ENCODE measurements at regions of chr16 and their contacts with region 1.

Region 1: GRCh38 chr16:53129281-53130158 is 74.7 kb downstream of the CHD9 start:
- DNase-seq: peak; percentile 55
- H3K4me3 ChIP-seq: peak overlapping the region; percentile 74
- H3K27ac ChIP-seq: peak overlapping the region; percentile 91
- H3K4me1 ChIP-seq: peaks cover 17% of the 10 kb centered on the region
- H3K27me3 ChIP-seq: no peaks in the 10 kb centered on the region

Region 2: GRCh38 chr16:53061701-53062159 is 67.8 kb before region 1 on chr16:
- in situ Hi-C with region 1: loop called (anchors 10 kb)
- DNase-seq: no peak
- H3K4me3 ChIP-seq: no peak overlapping the region
- H3K27ac ChIP-seq: no peak overlapping the region
- H3K4me1 ChIP-seq: peaks cover 7% of the 10 kb centered on the region; the same call in 1 of the 2 replicates
- H3K27me3 ChIP-seq: no peaks in the 10 kb centered on the region

Region 3: GRCh38 chr16:53829186-53829747 is 699.7 kb after region 1 on chr16:
- in situ Hi-C with region 1: no loop called
- DNase-seq: peak; percentile 65
- H3K4me3 ChIP-seq: no peak overlapping the region
- H3K27ac ChIP-seq: no peak overlapping the region
- H3K4me1 ChIP-seq: 0 out of 2 replicates have a peak, but pooled peaks cover 5% of the 10 kb centered on the region
- H3K27me3 ChIP-seq: no peaks in the 10 kb centered on the region